ENCODE measurements at regions of chr16 and their contacts with region 1.

Region 1: DNA sequence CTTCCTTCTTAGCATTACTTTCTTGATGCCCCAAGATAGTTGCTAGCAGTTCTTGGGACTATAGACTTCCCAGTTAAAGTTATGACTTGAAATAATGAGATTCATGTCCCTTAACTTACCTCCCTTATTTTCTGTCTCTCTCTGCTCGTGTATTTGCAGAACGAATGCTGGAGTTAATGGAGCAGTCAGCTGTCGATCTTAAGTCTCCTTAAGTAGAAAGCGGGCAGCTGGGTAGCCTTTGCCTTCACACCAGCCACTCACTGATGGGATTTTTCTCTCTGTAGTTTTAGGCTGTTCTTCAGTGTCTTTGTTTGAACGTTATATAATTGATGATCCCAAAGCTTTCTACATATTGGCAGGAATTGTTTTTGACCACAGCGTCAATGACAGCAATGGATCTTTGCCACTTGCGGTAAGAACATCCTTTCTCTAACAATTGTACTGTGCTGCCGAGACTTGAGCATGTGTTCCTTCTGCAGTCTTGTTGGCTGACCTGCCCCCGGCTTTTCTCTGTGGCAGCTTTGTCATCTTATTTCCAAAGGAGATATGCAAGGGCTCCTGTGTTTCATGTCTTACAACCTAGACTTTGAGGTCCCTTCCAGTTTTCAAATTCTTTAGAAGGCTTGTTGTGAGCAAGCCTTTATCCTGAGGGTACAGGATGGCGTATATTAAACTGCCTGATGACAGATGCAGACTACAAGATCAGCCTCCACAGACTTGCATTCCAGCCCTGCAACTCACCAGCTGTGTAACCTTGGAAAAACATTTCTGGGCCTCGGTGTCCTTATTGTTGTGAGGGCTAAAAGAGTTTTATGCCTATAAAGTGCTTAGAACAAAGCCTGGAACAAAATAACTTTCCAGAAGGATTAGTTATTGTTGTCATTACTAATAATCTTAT is 25.1 kb upstream of the ABCA3 start:
- DNase-seq: no peak
- H3K4me3 ChIP-seq: no peak overlapping the region
- H3K27ac ChIP-seq: no peak overlapping the region
- H3K4me1 ChIP-seq: no peaks in the 10 kb centered on the region
- H3K27me3 ChIP-seq: no peaks in the 10 kb centered on the region
- CTCF ChIP-seq: no peak
- POLR2A ChIP-seq: no peak

Region 2: DNA sequence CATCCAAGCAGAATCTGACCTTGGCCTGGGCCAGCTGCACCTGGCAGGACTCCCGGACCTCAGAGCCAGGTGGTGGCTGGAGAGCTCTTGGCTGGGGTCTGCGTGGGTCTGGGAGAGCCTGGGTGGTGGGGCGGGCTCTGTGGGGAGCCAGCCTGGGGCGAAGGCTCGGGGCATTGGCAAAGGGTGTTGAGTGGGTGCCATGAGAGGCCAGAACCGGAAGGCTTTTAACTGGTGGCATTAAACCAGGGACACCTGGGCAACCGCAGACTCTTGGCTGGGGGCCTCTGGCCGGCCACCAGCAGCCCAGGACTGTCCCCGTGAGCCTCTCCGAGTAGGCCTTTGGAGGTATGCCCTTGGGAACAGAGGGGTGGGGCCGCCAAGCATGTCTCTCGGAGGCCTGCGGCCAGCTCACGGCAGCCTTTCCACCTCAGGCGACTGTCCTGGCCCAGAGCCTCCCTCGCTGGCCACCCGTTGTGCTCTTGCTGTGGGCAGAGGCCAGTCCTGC is 337.6 kb after region 1 on chr16:
- intact Hi-C with region 1: loop called (anchors 10 kb)
- DNase-seq: peak; percentile 43
- H3K4me3 ChIP-seq: no peak overlapping the region
- H3K27ac ChIP-seq: no peak overlapping the region
- H3K4me1 ChIP-seq: no peaks in the 10 kb centered on the region
- H3K27me3 ChIP-seq: no peaks in the 10 kb centered on the region
- CTCF ChIP-seq: no peak
- POLR2A ChIP-seq: no peak